MCF 10A (cell line): ENCODE measurements at regions of chr11 and their contacts with region 1.

Region 1: DNA sequence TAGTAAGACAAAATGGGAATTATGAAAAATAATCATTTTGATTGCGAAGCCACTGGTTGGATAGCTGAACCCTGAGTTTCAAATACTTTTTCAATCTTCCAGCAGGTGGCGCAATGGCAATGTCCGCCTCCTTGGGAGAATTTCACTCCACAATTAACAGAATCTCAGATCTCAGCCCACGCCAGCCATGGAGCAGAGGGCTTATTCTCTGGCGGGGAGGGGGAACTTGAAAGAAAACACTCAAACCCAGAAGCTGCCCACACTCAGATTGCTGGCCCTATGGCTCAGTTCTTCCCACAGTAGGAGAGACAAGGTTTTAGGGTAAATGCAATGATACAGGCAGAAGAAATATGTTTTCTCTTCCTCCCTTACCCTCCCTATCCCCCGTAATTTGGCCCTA is 38.7 kb upstream of the RCN1 start:
- DNase-seq: peak; percentile 72
- H3K4me3 Mint-ChIP-seq: no peak overlapping the region
- H3K27ac Mint-ChIP-seq: no peak overlapping the region
- H3K4me1 Mint-ChIP-seq: peaks cover 6% of the 10 kb centered on the region
- H3K27me3 Mint-ChIP-seq: peaks cover 45% of the 10 kb centered on the region
- CTCF ChIP-seq: peak; percentile 74

Region 2: DNA sequence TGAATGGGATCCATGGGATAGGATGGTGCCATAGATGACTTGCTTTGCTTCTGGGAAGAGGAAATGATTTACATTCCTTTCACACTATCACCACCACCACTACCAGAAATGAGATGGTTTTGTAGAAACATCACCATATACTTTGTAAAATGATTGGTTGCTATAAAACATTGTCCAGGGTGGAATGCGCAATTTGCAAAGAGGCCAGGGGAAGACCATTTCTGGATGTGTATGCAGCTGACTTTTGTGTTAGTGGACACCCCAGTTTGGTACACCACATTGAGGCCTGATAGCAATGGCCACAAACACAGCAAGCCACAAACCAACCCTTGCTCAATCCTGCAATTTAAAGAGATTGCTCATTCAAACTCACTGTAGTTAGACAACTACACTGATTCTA is 18.1 kb before region 1 on chr11:
- CTCF ChIA-PET with region 1: interaction called, 10 read pairs
- POLR2A ChIA-PET with region 1: no interaction called
- intact Hi-C with region 1: no loop called
- DNase-seq: peak; percentile 16
- H3K4me3 Mint-ChIP-seq: no peak overlapping the region
- H3K27ac Mint-ChIP-seq: no peak overlapping the region
- H3K4me1 Mint-ChIP-seq: no peaks in the 10 kb centered on the region
- H3K27me3 Mint-ChIP-seq: peaks cover 12% of the 10 kb centered on the region
- CTCF ChIP-seq: no peak

Region 3: DNA sequence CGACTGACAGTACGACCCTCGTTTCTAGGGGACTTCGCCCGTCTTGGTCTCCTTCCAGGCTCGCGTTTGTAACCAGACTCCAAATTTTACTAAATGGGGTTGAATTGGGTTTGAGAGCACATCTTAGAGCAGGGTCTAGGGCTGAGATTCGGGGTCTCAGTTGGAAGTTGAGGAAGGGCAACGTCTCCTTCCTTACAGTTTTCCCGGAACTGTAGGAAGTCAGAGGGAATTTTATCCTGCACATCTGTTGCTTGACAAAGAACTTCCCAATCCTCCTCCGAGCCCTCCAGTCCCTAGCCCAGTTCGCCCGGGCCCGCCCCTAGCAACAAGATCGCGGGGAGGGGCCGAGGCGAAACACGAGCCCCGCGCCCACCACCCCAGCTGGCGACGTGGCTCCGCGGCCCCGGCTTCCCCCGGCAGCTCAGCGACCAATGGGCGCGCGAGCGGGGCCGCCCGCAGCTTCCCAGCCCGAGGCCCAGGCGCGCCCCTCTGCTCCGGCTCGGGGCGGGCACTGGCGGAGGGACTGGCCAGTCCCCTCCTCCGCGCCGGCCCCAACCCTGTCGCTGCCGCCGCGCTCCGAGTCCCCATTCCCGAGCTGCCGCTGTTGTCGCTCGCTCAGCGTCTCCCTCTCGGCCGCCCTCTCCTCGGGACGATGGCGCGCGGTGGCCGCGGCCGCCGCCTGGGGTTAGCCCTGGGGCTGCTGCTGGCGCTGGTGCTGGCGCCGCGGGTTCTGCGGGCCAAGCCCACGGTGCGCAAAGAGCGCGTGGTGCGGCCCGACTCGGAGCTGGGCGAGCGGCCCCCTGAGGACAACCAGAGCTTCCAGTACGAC is 38.5 kb after region 1 on chr11 and contains the start of gene RCN1:
- CTCF ChIA-PET with region 1: interaction called, 10 read pairs
- POLR2A ChIA-PET with region 1: no interaction called
- intact Hi-C with region 1: no loop called
- DNase-seq: peak; percentile 60
- H3K4me3 Mint-ChIP-seq: peak within 1 kb of the TSS; percentile 79
- H3K27ac Mint-ChIP-seq: peak within 1 kb of the TSS; percentile 90
- H3K4me1 Mint-ChIP-seq: peaks cover 36% of the 10 kb centered on the region
- H3K27me3 Mint-ChIP-seq: no peaks in the 10 kb centered on the region
- CTCF ChIP-seq: no peak
- total RNA-seq, gene RCN1: 155 and 158 TPM in 2 replicates

Region 4: GRCh38 chr11:32162351-32162750 is 110.1 kb after region 1 on chr11:
- CTCF ChIA-PET with region 1: interaction called, 30 read pairs
- POLR2A ChIA-PET with region 1: no interaction called
- intact Hi-C with region 1: no loop called
- DNase-seq: no peak
- H3K4me3 Mint-ChIP-seq: no peak overlapping the region
- H3K27ac Mint-ChIP-seq: no peak overlapping the region
- H3K4me1 Mint-ChIP-seq: no peaks in the 10 kb centered on the region
- H3K27me3 Mint-ChIP-seq: peaks cover 57% of the 10 kb centered on the region
- CTCF ChIP-seq: no peak

Region 5: DNA sequence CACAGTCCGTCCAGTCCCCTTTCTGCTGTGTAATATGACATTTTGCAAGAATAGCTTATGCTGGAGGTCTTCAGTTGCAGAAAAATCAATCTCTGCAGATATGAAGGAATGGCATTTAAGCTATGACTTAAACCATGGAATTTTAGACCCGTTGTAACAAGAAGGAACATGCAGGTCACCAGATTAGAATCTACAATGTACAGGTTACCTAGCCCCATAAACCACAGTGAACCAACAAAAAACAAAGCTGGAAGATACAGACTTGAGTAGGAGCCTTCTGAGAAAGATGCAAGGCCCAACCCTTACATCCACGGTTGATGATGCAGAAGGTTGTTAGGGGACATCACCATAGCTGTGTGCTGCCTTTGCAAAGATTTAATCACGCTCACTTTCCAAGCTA is 250.6 kb after region 1 on chr11:
- CTCF ChIA-PET with region 1: interaction called, 95 read pairs
- POLR2A ChIA-PET with region 1: no interaction called
- intact Hi-C with region 1: no loop called
- DNase-seq: no peak
- H3K4me3 Mint-ChIP-seq: no peak overlapping the region
- H3K27ac Mint-ChIP-seq: no peak overlapping the region
- H3K4me1 Mint-ChIP-seq: no peaks in the 10 kb centered on the region
- H3K27me3 Mint-ChIP-seq: no peaks in the 10 kb centered on the region
- CTCF ChIP-seq: no peak